ENCODE measurements at regions of chr6 and their contacts with region 1.

Region 1: GRCh38 chr6:130885392-130886192 is 58.4 kb downstream of the SMLR1 start:
- DNase-seq: peak in 1 of 3 donors; percentile 76
- ATAC-seq: peak; percentile 97 to 99 (median 98)
- H3K4me3 ChIP-seq: no peak overlapping the region
- H3K27ac ChIP-seq: no peak overlapping the region
- H3K4me1 ChIP-seq: peaks cover 0 to 4% (median 0%) of the 10 kb centered on the region in 4 donors
- H3K27me3 ChIP-seq: no peaks in the 10 kb centered on the region
- CTCF ChIP-seq: peak; percentile 85 to 98 (median 92)
- POLR2A ChIP-seq: no peak

Region 2: DNA sequence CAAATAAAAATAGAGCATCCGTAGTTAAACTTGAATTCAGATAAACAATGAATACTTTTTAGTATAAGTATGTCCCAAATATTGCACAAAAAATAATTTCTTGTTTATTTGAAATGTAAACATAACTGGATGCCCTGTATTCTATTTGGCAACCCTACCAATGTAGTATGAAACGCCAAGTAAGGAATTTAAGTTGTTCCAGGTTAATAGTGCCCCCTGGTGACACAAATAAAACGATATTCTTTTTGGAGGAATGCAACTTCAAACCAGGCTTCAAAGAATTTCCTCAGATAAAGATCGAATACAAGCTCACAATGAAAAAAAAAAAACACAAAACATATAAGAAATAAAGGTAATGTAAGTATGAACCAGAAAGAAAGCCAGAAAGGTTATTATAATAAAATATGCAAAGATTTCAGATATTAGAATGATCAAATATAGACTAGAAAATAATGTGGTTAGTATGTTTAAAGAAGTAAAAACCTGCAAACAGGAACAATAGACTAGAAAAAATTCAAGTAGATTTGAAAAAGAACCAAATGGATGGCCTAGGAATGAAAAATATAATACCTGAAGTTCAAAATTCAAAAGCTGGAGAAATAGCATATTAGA is 231.3 kb after region 1 on chr6:
- intact Hi-C with region 1: loop called (anchors 5 to 10 kb)
- DNase-seq: no peak
- ATAC-seq: peak; percentile 75 to 90 (median 84)
- H3K4me3 ChIP-seq: no peak overlapping the region
- H3K27ac ChIP-seq: no peak overlapping the region
- H3K4me1 ChIP-seq: peaks cover 0 to 4% (median 0%) of the 10 kb centered on the region in 4 donors
- H3K27me3 ChIP-seq: no peaks in the 10 kb centered on the region
- CTCF ChIP-seq: peak; percentile 57 to 74 (median 60)
- POLR2A ChIP-seq: no peak

Region 3: DNA sequence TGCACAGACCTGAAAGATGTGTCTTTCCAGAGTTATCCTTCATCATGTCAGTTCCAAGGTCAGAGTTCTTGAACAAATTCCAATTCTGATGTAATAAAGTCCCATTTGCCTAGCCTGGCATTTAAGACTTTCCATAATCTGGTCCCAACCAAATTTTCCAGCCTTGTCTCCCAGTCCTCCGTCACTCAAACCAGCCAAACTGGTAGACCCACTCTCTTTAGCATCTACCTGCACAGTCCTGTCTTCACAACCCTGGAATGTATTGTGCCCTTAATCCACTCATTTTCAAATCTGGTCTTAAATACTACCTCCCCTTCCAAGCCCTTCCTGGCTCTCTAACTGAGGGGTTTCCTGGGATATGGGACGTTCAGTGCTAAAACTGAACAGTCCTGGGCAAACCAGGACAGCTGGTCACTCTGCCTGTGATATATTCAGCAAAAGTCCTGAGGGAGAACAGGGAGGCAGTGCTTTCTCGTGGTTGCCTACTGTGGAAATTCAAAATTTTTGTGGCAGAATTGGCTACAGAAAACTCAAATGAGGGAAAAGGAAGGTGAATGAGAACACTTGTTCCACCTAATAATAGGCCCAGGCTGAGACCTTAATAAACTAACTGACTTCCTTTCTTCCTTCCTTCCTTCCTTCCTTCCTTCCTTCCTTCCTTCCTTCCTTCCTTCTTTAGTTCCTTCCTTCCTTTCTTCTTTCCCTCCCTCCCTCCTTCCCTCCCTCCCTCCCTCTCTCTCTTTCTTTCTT is 238.9 kb after region 1 on chr6:
- intact Hi-C with region 1: loop called (anchors 5 to 10 kb)
- DNase-seq: no peak
- ATAC-seq: no peak
- H3K4me3 ChIP-seq: no peak overlapping the region
- H3K27ac ChIP-seq: no peak overlapping the region
- H3K4me1 ChIP-seq: peaks cover 0 to under 1% (median under 1%) of the 10 kb centered on the region in 4 donors
- H3K27me3 ChIP-seq: no peaks in the 10 kb centered on the region
- CTCF ChIP-seq: no peak
- POLR2A ChIP-seq: no peak

Measured in right lobe of liver (tissue), 6 donors.